Left cardiac atrium (tissue), 4 donors: ENCODE measurements at regions of chr3 and their contacts with region 1.

Region 1: DNA sequence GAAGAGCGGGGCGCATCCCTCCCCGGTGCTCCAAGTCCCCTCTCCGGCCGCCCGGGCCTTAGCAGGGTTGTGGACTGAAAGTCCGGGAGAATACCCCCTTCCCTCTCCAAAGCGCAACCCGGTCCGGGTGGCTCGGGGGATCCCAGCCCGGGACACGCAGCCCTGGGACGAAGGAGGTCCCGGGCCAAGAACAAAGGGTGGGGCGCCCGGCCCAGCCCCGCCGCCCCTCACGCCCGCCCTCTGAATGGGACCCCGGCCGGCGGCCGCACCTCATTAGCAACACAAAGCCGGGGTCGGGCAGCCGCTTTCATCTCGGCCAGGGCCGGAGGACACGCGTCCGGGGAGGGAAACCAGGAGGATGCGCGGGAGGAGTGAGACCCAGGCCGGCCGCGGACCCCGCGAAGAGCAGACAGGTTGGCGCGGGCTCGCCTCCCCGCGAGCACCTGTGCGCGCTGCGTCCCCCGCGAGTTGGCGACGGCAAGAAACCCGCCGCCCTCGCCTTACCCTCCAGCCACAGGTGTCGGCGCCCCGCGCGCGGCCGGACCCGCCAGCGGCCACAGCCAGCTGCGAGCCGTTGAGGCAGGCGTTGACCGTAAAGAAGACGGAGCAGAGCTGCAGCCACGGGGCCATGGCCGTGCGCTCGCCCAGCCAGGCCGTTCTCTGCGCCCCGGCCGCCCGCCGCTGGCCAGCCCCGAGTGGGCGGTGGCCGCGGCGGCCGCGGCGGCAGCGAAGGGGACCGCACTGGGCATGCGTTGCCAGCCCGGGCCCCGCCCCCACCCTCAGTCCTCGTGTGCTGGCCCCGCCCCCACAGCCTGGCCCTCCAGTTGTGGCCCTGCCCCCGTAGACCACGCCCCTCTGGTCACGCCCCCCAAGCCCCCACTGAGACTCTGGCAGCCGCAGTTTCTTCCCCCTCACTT is at the start of gene IL17RD:
- DNase-seq: peak; percentile 90
- ATAC-seq: peak; percentile 88 to 93
- total RNA-seq, gene IL17RD: 3.9 to 5.9 TPM

Region 2: DNA sequence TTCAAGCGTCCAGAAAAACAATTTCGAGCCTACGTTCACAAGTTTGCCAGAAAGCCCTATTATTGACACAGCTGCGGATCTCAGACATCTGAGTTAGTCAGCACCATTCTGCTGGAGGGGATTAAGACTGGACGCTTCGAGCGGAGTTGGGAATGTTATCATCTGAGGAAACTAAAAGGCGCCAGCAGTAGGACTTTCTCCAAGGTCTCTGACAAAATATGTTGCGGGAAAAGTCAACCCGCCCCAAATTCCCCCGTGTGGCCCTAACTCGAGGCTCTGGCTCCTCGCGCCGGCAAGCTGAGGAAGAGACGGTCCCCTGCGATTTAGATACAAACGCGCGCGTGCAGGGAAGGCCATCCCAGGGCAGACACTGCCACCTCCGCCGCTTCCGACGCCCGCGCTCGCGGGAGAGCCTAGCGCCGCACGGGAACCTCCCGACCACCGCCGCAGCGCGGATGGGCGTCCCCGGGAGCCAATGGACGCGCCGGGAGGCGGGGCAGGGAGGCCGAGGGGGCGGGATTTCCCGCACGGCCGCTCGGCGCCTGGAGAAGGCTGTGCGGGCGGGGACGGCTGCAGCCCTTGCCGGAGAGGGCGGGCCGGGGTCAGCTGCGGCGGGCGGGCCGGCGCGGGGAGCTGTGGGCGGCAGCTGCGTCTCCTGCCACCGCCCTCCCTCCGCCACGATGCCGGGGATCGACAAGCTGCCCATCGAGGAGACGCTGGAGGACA is 62.5 kb after region 1 on chr3 and contains the start of gene APPL1:
- intact Hi-C with region 1: loop called in 1 of 2 experiments (anchors 5 kb)
- DNase-seq: peak; percentile 94
- ATAC-seq: peak; percentile 98 to 99
- total RNA-seq, gene APPL1: 33.5 to 38.1 TPM